Cardiac septum (tissue), 1 donor: ENCODE measurements at regions of chr11 and their contacts with region 1.

Region 1: DNA sequence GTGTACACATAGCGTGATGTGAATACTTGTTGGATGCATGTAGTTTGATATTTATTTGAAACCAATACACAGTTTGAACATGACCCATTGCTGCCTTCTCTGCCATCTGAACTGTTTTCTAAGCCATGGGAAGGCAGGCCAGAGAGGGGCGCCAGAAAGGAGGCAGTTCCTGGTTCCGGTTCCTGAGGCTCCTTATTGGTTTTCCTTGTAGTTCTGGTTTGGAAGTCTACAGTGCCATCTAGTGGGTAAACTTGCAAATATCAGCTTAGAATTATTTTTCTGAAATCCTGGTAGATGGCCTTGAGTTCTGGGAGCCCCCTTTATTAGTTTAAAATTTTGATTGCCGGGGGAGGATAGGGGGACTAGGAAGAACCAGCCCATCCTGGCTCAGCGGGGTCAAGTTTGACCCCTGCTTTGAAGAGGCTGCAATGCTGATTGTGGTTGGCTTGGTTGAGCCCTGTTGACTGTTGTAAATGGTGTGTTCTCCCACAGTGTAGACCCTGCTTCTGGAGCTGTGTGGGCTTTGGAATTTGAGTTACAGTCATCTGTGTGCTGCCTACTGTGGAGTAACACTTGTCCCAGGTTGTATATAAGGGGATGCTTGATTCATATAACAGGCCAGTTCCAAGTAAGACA is 48.4 kb downstream of the GRAMD1B start:
- DNase-seq: no peak

Region 2: GRCh38 chr11:123110356-123110755 is 368.1 kb before region 1 on chr11:
- intact Hi-C with region 1: loop called (anchors 10 kb)
- DNase-seq: no peak

Region 3: GRCh38 chr11:123301696-123302400 is 176.6 kb before region 1 on chr11:
- intact Hi-C with region 1: loop called (anchors 2 kb)
- DNase-seq: peak; percentile 87

Region 4: DNA sequence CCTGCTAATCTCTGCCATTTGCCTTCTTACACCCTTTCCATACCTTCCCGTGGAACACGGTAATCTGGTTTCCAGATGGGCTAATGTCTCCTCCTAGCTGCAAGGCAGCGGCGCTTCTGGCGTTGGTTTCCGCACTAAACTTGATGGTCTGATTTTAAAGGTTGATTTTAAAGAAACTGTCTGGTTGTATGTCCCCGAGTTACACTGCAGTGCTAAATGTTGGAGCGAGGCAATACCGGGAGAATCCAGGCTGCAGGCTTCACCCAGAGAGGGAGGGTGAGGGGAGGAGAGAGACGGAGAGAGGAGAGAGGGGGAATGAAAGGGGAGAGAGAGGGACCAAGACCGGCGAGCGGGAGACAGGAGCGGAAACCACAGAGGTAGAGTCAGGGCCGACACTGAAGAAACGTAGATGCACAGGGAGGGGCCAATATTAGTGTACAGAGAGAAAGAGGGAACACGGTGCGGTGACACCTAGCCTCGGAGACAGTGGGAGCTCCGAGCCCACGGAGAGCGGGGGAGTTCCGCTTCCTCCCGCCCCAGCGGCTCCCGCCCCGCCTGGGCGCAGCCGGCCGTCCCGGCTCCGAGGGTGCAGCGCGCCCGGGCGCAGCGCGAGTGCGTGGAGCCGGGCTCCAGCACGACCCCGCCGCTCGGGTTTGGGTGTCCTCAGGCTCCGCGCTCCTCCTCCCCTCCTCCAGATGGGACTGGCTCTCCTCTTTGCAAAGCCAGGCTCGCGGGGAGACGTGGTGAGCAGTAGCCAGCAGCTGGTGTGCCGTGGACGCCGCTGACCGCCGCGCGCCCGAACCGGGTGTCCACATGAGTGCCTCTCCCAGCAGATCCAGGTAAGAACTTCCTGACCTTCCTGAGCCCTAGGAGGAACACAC is 120.3 kb before region 1 on chr11:
- intact Hi-C with region 1: loop called (anchors 5 kb)
- DNase-seq: no peak

Region 5: GRCh38 chr11:123381817-123382554 is 96.5 kb before region 1 on chr11:
- intact Hi-C with region 1: no loop called
- DNase-seq: no peak

Region 6: DNA sequence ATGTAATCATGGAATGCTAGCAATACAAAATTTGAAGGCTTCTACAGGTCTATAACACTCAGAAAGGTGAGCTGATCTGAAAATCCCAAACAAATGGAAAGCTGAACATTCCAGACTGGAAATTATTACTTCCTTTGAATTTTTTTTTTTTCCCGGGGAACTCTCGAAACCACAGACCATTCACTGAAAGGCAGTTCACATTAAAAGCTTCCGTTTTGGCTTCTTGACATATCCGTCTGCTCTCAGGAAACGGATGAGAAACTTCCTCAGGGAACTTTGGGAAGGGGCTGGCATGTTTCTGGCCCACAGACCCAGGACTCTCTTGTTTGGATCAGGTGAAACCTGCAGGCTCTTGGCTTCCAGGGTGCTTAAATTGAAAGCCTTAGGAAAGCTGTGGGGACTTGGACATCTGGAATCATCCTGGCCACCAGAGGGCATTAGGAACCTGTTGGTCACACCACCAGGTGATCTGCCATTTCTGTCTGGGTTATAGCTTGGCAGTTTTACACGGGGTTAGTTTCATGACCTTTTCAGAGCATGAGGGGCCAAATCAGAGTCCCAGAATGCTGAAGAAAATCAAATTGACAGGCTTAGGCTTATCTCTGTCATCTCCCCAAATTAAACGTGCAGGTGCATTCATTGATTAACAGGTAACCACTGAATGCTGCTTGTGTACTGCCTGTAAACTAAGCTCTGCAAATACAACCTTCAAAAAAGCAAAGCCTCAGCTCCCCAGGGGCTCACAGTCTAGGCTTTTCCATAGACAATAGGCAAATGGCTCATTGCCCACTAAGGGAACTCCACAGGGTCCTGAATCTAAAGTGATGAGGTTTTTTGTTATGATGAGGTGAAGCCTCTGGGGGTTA is 71.1 kb before region 1 on chr11:
- intact Hi-C with region 1: loop called (anchors 1 kb)
- DNase-seq: no peak

Region 7: GRCh38 chr11:123580557-123581275 is 102.2 kb after region 1 on chr11:
- intact Hi-C with region 1: no loop called
- DNase-seq: peak; percentile 90